Adrenal gland (tissue), 19 donors: ENCODE measurements at regions of chr7 and their contacts with region 1.

Region 1: DNA sequence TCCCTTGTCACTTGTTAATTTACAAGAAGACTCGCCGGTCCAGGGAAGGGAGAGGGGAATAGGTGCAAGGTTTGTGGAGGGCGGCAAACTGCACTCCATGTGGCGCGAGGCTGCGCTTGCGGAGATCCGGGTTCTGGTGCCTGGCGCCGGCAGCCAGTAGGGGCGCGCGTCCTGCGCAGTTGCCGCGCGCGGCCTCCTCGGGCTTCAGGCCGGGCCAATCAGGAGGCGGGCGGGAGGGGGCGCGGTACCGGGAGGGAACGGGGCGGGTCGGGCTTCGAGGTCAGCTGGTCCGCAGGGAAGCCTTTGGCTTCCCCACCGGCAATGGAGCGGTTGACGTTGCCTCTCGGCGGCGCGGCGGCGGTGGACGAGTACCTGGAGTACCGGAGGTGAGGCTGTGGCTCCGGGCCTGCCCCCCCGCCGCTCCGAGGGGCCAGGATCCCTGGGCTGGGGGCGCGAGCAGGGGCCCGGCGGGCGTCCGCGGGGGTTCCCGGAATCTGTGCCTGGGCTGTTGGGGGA is at the start of gene FAM221A:
- DNase-seq: peak; percentile 89 to 93 (median 91)
- H3K4me3 ChIP-seq: peak within 1 kb of the TSS; percentile 12 to 74 (median 60)
- H3K27ac ChIP-seq: peak within 1 kb of the TSS in 4 of 5 donors; percentile 46 to 83 (median 68)
- H3K4me1 ChIP-seq: peaks cover 4 to 10% of the 10 kb centered on the region in 2 donors
- H3K27me3 ChIP-seq: no peaks in the 10 kb centered on the region
- CTCF ChIP-seq: peak; percentile 51 to 79 (median 70)
- POLR2A ChIP-seq: no peak
- total RNA-seq, gene FAM221A: 1.3 to 5.2 (median 4.3) TPM

Region 2: GRCh38 chr7:23438170-23438569 is 241.8 kb before region 1 on chr7:
- intact Hi-C with region 1: no loop called
- DNase-seq: no peak
- H3K4me3 ChIP-seq: no peak overlapping the region
- H3K27ac ChIP-seq: no peak overlapping the region
- H3K4me1 ChIP-seq: no peaks in the 10 kb centered on the region
- H3K27me3 ChIP-seq: peaks cover 1% of the 10 kb centered on the region
- CTCF ChIP-seq: no peak
- POLR2A ChIP-seq: no peak

Region 3: DNA sequence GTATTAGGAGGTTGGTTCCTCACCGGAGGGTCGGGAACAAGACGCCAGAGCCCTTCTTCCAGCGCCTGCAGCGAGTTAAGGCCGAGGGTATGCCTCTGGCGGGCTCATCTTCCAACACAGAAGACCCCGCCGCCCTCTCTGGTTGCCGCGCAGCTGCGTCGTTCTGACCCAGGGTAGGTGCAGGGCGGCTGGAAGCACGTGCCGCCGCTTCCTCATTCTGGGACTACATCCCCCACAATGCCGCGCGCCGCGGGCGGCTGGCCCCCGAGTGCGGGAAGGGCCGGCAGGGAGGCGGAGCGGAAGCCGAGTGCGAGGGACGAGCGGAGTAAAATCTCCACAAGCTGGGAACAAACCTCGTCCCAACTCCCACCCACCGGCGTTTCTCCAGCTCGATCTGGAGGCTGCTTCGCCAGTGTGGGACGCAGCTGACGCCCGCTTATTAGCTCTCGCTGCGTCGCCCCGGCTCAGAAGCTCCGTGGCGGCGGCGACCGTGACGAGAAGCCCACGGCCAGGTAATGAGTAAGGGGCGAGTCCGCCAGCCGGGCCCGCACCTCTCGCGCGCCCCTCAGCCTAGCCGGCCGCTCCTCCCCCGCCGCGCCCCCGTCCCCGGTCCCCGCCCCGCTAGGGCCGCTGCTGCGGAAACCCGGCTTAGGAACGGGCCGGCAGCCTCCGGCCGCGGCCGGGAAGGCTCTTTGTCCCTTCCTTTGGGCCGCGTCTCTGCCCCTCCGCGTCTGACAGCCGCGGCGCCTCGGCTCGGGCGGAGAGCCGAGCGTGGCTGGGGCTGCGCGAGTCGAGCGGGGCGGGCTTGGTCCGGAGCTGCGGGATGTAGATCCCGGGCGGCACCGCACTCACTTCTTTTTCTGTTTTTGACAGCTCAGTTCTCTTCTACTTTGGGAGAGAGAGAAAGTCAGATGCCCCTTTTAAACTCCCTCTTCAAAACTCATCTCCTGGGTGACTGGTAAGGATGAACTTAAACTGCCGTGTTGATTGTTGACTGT is 82.6 kb before region 1 on chr7 and contains the start of gene CCDC126:
- intact Hi-C with region 1: loop called in 1 of 2 experiments (anchors 5 kb)
- DNase-seq: peak; percentile 89 to 95 (median 92)
- H3K4me3 ChIP-seq: peak within 1 kb of the TSS; percentile 62 to 93 (median 74)
- H3K27ac ChIP-seq: peak within 1 kb of the TSS; percentile 81 to 98 (median 92)
- H3K4me1 ChIP-seq: peaks cover 3 to 12% of the 10 kb centered on the region in 2 donors
- H3K27me3 ChIP-seq: no peaks in the 10 kb centered on the region
- CTCF ChIP-seq: no peak
- POLR2A ChIP-seq: peak; percentile 27 to 80
- total RNA-seq, gene CCDC126: 7.9 to 48.0 (median 11.2) TPM